CD4-positive, alpha-beta T cell (primary cell): ENCODE measurements at regions of chr3 and their contacts with region 1.

Region 1: DNA sequence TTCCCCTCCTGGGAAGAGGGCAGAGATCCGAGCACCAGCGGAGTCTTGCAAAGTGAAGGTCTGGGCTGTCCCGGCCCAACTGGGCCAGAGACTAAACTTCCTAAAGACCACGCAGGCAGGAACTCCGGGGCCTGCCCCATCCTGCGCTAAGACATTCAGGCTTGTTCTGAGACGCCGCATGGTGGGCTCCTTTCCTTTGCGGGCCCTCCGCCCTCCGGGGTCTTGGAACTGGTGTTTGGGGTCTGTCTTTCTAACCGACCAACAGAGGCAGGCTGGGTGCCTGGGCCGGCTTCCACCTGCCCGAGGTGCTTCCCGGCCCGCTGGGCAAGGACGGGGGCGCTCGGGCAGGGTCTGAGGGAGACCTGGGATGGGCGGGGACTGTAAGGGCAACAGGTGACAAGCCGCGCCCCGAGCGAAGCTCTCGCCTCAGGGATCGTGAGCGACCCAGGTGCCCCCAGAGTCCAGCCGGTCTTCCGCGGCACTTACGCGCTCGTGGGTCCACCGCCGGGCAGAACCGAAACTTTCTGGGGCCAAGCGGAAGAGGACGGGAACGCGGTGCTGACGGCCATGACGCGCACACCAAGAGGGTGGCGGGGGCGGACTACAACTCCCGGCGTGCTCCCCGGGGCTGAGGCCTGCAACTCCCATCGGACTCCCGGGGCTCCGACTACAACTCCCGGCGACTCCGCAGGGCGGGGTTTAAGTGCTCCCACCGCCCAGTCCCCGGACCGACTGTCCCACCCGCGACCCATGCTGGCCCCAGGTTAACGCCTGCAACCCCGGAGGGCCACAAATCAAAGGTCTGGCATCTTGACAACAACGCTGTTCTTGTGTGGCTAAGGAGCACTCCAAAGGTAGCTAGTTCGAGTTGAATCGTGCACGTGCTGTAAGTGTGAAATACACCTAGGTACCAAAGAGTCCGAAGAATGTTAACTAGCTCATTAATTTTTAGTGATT is at the start of gene FYCO1:
- DNase-seq: peak; percentile 78 to 94 (median 84)
- ATAC-seq: peak; percentile 84
- H3K4me3 ChIP-seq: peak within 1 kb of the TSS; percentile 87
- H3K4me3 Mint-ChIP-seq: peak within 1 kb of the TSS; percentile 94
- H3K27ac ChIP-seq: peak within 1 kb of the TSS; percentile 75 to 90
- H3K27ac Mint-ChIP-seq: peak within 1 kb of the TSS; percentile 92
- H3K4me1 ChIP-seq: peaks cover 50% of the 10 kb centered on the region
- H3K4me1 Mint-ChIP-seq: peaks cover 51% of the 10 kb centered on the region
- H3K27me3 ChIP-seq: no peaks in the 10 kb centered on the region
- H3K27me3 Mint-ChIP-seq: no peaks in the 10 kb centered on the region
- CTCF ChIP-seq: no peak
- total RNA-seq, gene FYCO1: 17.4 to 20.1 TPM

Region 2: DNA sequence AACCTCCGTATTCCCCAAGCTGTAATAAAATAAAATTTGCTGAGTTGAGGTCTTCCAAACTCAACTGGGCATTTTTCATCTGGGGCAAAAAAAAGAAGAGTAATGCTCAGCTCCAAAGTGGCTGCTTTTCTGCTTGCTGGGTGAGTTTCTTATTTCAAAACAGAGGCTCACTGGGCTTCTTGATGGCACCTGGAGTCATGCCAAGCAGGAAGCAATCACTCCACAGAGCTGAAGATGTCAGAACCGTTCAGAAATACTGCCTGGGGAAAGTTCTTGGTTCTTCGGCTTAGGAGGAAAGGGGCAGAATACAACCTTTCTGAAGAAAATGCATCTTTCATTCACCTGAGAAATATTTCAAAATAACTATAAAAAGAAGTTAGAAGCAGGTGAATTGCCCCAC is 105.1 kb before region 1 on chr3:
- CTCF ChIA-PET with region 1: no interaction called
- POLR2A ChIA-PET with region 1: no interaction called
- intact Hi-C with region 1: no loop called
- DNase-seq: peak in 6 of 14 experiments; percentile 12 to 70 (median 49)
- ATAC-seq: peak; percentile 32
- H3K4me3 ChIP-seq: no peak overlapping the region
- H3K4me3 Mint-ChIP-seq: peak overlapping the region; percentile 81
- H3K27ac ChIP-seq: no peak overlapping the region
- H3K27ac Mint-ChIP-seq: peak overlapping the region; percentile 69
- H3K4me1 ChIP-seq: peaks cover 26% of the 10 kb centered on the region
- H3K4me1 Mint-ChIP-seq: peaks cover 69% of the 10 kb centered on the region
- H3K27me3 ChIP-seq: no peaks in the 10 kb centered on the region
- H3K27me3 Mint-ChIP-seq: peaks cover 4% of the 10 kb centered on the region
- CTCF ChIP-seq: no peak

Region 3: DNA sequence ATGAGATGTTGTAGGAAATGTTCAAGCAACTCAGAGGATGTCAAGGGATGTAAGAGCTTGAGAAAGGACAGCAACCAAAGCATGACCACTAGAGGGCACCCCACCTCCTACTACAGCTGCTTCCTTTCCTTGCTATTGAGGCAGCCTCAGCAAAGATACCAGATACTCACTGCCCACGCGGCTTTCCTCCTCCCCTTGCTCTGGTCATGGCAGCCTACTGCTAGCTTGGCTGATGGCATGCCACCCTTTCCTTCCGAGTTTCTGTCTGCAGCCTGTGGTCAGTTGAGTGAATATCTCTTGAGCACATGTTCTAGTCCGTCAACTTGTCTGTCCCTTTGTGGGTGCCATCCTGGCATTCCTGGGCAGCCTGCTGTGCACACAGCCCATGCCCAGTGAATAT is 56.6 kb before region 1 on chr3:
- CTCF ChIA-PET with region 1: interaction called, 5 read pairs
- POLR2A ChIA-PET with region 1: interaction called, 14 read pairs
- intact Hi-C with region 1: no loop called
- DNase-seq: peak; percentile 72 to 93 (median 82)
- ATAC-seq: peak; percentile 65
- H3K4me3 ChIP-seq: no peak overlapping the region
- H3K4me3 Mint-ChIP-seq: no peak overlapping the region
- H3K27ac ChIP-seq: no peak overlapping the region
- H3K27ac Mint-ChIP-seq: no peak overlapping the region
- H3K4me1 ChIP-seq: peaks cover 30% of the 10 kb centered on the region
- H3K4me1 Mint-ChIP-seq: peaks cover 37% of the 10 kb centered on the region
- H3K27me3 ChIP-seq: no peaks in the 10 kb centered on the region
- H3K27me3 Mint-ChIP-seq: no peaks in the 10 kb centered on the region
- CTCF ChIP-seq: peak; percentile 83

Region 4: DNA sequence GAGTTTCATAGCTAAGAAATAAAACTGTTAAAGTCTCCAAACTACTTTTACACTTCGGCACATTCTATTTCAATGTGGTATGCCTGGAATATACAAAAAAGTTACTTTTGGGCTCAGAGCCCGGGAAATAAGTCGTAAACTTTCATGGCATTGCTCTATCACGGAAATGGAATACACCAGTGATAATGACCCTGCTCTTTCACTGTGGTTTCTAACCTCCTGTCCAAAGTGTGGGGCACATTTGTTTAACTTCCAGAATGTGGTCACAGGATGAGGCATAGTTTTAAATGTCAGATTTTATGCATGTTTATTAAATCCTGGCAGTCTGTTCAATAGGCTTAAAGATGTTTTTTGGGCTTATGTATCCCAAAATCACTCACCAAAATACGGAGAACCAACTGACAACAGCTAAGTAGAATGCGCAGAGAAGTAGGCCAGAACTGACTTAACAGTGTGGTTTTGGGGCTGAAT is 47.2 kb before region 1 on chr3:
- CTCF ChIA-PET with region 1: no interaction called
- POLR2A ChIA-PET with region 1: interaction called, 14 read pairs
- intact Hi-C with region 1: loop called (anchors 5 kb)
- DNase-seq: no peak
- ATAC-seq: no peak
- H3K4me3 ChIP-seq: no peak overlapping the region
- H3K4me3 Mint-ChIP-seq: no peak overlapping the region
- H3K27ac ChIP-seq: peak overlapping the region in 1 of 2 donors; percentile 79
- H3K27ac Mint-ChIP-seq: peak overlapping the region; percentile 59
- H3K4me1 ChIP-seq: peaks cover 82% of the 10 kb centered on the region
- H3K4me1 Mint-ChIP-seq: peaks cover 83% of the 10 kb centered on the region
- H3K27me3 ChIP-seq: no peaks in the 10 kb centered on the region
- H3K27me3 Mint-ChIP-seq: no peaks in the 10 kb centered on the region
- CTCF ChIP-seq: no peak

Region 5: GRCh38 chr3:45978006-45978761 is 17.3 kb before region 1 on chr3:
- CTCF ChIA-PET with region 1: interaction called, 5 read pairs
- POLR2A ChIA-PET with region 1: interaction called, 42 read pairs
- intact Hi-C with region 1: loop called (anchors 1 kb)
- DNase-seq: peak in 13 of 14 experiments; percentile 35 to 74 (median 46)
- ATAC-seq: peak; percentile 17
- H3K4me3 ChIP-seq: no peak overlapping the region
- H3K4me3 Mint-ChIP-seq: peak overlapping the region; percentile 81
- H3K27ac ChIP-seq: peak overlapping the region in 1 of 2 donors; percentile 8
- H3K27ac Mint-ChIP-seq: peak overlapping the region; percentile 96
- H3K4me1 ChIP-seq: peaks cover 77% of the 10 kb centered on the region
- H3K4me1 Mint-ChIP-seq: peaks cover 68% of the 10 kb centered on the region
- H3K27me3 ChIP-seq: no peaks in the 10 kb centered on the region
- H3K27me3 Mint-ChIP-seq: no peaks in the 10 kb centered on the region
- CTCF ChIP-seq: no peak

Region 6: GRCh38 chr3:46065294-46065721 is 69.8 kb after region 1 on chr3:
- CTCF ChIA-PET with region 1: no interaction called
- POLR2A ChIA-PET with region 1: interaction called, 29 read pairs
- intact Hi-C with region 1: loop called in 1 of 2 experiments (anchors 1 kb)
- DNase-seq: peak; percentile 62 to 97 (median 75)
- ATAC-seq: peak; percentile 84
- H3K4me3 ChIP-seq: no peak overlapping the region
- H3K4me3 Mint-ChIP-seq: peak overlapping the region; percentile 70
- H3K27ac ChIP-seq: peak overlapping the region; percentile 17 to 37
- H3K27ac Mint-ChIP-seq: peak overlapping the region; percentile 87
- H3K4me1 ChIP-seq: peaks cover 69% of the 10 kb centered on the region
- H3K4me1 Mint-ChIP-seq: peaks cover 69% of the 10 kb centered on the region
- H3K27me3 ChIP-seq: no peaks in the 10 kb centered on the region
- H3K27me3 Mint-ChIP-seq: peaks cover under 1% of the 10 kb centered on the region
- CTCF ChIP-seq: no peak

Region 7: GRCh38 chr3:46070595-46071093 is 75.1 kb after region 1 on chr3:
- CTCF ChIA-PET with region 1: interaction called, 3 read pairs
- POLR2A ChIA-PET with region 1: interaction called, 29 read pairs
- intact Hi-C with region 1: loop called (anchors 1 to 5 kb)
- DNase-seq: peak in 3 of 14 experiments; percentile 48 to 63 (median 51)
- ATAC-seq: peak; percentile 10
- H3K4me3 ChIP-seq: no peak overlapping the region
- H3K4me3 Mint-ChIP-seq: peak overlapping the region; percentile 0
- H3K27ac ChIP-seq: peak overlapping the region in 1 of 2 donors; percentile 20
- H3K27ac Mint-ChIP-seq: peak overlapping the region; percentile 9
- H3K4me1 ChIP-seq: peaks cover 30% of the 10 kb centered on the region
- H3K4me1 Mint-ChIP-seq: peaks cover 62% of the 10 kb centered on the region
- H3K27me3 ChIP-seq: no peaks in the 10 kb centered on the region
- H3K27me3 Mint-ChIP-seq: no peaks in the 10 kb centered on the region
- CTCF ChIP-seq: no peak